HEK293T (cell line): ENCODE measurements at regions of chr17 and their contacts with region 1.

Region 1: GRCh38 chr17:4143563-4144421 is 795 bp downstream of the CYB5D2 start:
- DNase-seq: peak; percentile 85

Region 2: DNA sequence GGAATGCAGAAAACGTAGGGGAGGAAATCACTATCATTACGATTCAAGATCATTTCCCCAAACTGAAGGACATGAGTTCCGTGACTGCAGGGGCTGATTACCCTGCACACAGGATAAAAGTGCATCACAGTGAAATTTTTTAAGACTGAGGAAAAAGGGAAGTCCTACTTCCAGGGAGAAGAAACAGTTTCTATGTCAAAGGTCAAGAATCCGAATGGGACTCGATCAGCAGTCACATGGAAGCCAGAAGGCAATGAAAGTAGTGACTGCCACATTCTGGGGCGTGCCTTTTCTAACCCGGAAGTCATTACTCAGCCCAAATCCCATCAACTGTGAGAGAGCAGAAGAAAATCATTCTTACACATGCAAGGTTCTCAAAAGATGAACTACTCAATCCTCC is 13.1 kb before region 1 on chr17:
- CTCF ChIA-PET with region 1: no interaction called
- POLR2A ChIA-PET with region 1: interaction called, 15 read pairs
- DNase-seq: no peak

Region 3: GRCh38 chr17:4161179-4161559 is 17.4 kb after region 1 on chr17:
- CTCF ChIA-PET with region 1: interaction called, 3 read pairs
- POLR2A ChIA-PET with region 1: interaction called, 145 read pairs
- DNase-seq: peak; percentile 47